ENCODE measurements at regions of chr1 and their contacts with region 1.

Region 1: DNA sequence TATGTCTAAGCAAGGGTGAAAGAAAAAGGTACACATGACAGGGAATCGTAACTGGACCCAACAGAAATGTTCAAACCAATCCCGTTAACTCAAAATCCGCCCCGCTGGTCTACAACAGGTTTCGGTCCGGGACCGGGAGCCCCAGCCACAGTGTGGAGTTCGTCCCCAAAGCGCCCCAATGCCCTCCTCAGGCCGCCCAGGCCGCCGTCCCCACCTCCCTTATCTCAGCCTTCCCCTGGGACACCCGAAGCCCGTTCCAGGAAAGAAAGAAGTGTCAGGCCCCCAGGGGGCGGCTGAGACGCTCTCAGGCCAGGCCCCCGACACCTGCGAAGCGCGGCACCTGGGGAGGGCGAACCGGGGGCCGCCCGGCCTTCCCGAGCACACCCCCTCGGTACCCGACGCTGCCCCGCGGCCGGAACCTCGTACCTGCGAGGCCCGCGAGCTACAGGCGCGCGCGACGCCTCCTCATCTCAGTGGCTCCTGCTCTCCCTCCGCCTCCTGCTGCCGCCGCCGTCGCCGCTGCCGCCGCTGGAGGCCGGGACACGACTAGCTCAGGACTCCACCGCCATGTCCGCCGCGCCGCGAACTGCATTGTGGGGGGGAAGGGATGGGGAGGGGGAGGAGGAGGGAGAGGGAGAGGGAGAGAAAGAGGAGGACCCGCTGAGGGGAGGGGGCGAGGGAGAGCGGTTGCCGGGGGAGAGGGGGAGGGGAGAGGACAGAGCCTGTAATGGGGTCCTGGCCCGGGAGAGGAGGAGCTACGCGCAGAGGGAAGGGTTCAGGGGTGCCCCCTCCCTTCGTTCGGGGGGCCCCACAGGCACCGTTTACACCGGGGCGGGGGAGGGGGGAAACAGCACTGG is at the start of gene TUT4:
- DNase-seq: peak; percentile 74
- ATAC-seq: peak; percentile 53
- H3K4me3 Mint-ChIP-seq: no peak within 1 kb of the TSS
- H3K27ac Mint-ChIP-seq: peak within 1 kb of the TSS; percentile 83
- H3K4me1 Mint-ChIP-seq: peaks cover 39% of the 10 kb centered on the region
- H3K27me3 Mint-ChIP-seq: no peaks in the 10 kb centered on the region
- CTCF ChIP-seq: no peak
- total RNA-seq, gene TUT4: 143 and 158 TPM in 2 replicates

Region 2: GRCh38 chr1:52365746-52366516 is 186.8 kb before region 1 on chr1 and contains the start of gene CC2D1B:
- CTCF ChIA-PET with region 1: no interaction called
- POLR2A ChIA-PET with region 1: interaction called, 3 read pairs
- intact Hi-C with region 1: loop called (anchors 10 kb)
- DNase-seq: peak; percentile 100
- ATAC-seq: peak; percentile 95
- H3K4me3 Mint-ChIP-seq: peak within 1 kb of the TSS; percentile 94
- H3K27ac Mint-ChIP-seq: peak within 1 kb of the TSS; percentile 88
- H3K4me1 Mint-ChIP-seq: peaks cover 30% of the 10 kb centered on the region
- H3K27me3 Mint-ChIP-seq: peaks cover 2% of the 10 kb centered on the region
- CTCF ChIP-seq: no peak
- total RNA-seq, gene CC2D1B: 51.3 and 66.4 TPM in 2 replicates

Region 3: DNA sequence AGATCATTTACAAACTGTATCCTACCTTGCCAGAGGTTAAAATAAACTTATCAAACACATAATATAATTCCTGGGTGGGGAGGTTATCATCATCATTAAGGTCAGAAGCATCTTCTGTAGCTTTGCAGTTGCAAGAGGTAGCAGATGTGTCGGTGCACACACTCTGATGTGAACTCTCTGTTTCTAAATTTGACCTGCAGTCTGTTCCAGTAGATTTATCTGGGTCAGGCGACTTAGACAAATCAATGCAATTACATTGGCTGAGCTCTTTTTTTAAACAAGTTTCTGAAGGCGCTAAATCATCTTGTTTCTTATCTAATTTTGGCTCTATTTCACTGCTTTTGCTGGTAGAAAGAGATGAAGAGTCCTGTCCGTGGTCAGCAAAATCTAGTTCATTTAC is 77.9 kb before region 1 on chr1:
- CTCF ChIA-PET with region 1: no interaction called
- POLR2A ChIA-PET with region 1: no interaction called
- intact Hi-C with region 1: no loop called
- DNase-seq: no peak
- ATAC-seq: no peak
- H3K4me3 Mint-ChIP-seq: no peak overlapping the region
- H3K27ac Mint-ChIP-seq: no peak overlapping the region
- H3K4me1 Mint-ChIP-seq: peaks cover 2% of the 10 kb centered on the region
- H3K27me3 Mint-ChIP-seq: no peaks in the 10 kb centered on the region
- CTCF ChIP-seq: no peak

Region 4: GRCh38 chr1:52534928-52535764 is 17.6 kb before region 1 on chr1:
- CTCF ChIA-PET with region 1: no interaction called
- POLR2A ChIA-PET with region 1: interaction called, 71 read pairs
- intact Hi-C with region 1: loop called (anchors 1 kb)
- DNase-seq: no peak
- ATAC-seq: no peak
- H3K4me3 Mint-ChIP-seq: no peak overlapping the region
- H3K27ac Mint-ChIP-seq: no peak overlapping the region
- H3K4me1 Mint-ChIP-seq: peaks cover 74% of the 10 kb centered on the region
- H3K27me3 Mint-ChIP-seq: no peaks in the 10 kb centered on the region
- CTCF ChIP-seq: no peak

Region 5: DNA sequence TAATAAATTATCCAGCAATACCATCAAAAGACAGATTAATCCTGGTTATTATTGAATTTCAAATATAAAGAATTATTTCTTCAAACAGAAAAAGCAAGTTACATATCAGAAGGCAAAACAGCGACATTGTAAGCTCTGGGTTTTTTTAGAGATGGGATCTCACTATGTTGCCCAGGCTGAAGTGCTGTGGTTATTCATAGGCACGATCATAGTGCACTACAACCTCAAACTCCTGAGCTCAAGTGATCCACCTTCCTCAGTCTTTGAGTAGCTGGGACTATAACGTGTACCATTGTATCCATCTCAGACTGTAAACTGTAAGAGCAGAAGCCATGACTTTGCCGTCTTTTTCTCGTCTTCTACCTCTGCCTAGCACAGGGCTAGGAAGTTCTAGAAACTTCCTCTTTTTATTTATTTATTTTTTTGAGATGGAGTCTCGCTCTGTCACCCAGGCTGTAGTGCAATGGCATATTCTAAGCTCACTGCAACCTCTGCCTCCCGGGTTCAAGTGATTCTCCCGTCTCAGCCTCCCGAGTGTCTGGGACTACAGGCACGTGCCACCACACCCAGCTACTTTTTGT is 29.5 kb after region 1 on chr1:
- CTCF ChIA-PET with region 1: no interaction called
- POLR2A ChIA-PET with region 1: no interaction called
- intact Hi-C with region 1: no loop called
- DNase-seq: no peak
- ATAC-seq: no peak
- H3K4me3 Mint-ChIP-seq: no peak overlapping the region
- H3K27ac Mint-ChIP-seq: no peak overlapping the region
- H3K4me1 Mint-ChIP-seq: peaks cover 7% of the 10 kb centered on the region
- H3K27me3 Mint-ChIP-seq: no peaks in the 10 kb centered on the region
- CTCF ChIP-seq: no peak

Region 6: DNA sequence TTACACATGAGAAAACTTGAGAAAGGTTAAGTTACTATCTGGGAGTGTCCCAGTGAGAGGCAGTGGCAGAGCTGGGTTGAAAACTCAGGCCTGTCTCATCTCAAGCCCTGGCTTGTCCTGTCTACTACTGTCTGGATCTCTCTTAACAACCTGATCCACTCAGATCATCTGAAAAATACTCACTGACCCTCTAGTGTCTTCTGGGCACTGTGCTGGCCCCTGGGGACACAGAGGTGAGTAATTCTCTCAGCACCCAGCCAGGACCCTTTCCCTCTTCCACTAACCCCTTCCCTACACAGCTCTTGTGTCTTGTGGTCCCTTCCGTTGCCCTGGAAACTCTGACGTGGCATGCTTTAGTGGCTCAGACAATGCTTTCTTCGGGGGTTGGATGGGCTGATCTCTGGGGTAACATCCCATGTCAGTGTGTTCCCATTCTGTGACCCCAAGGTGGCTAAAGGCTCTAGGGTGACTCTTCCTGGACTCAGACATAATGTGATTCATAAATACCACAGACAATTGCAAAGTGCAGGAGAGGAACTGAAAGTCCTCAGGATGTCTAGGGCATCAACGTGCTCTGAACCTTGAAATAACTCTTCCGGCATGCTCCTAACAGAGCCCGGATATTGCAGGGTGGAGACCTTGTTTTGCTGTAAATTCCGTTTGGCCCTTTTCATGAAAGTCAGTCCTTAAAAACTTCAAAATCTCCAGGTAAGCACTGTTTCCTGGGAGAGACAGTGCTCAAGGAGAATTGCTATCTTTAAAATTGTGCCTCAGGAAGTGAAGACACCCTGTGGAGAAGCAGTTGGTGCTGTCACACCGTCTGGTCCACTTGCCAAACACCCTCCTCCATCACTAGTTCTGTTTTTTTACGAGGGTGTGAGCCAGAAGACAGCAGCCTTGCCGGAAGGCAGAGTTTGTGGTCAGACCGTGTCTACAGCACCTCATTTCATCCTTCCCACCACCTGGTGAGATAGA is 84.3 kb after region 1 on chr1:
- CTCF ChIA-PET with region 1: interaction called, 6 read pairs
- POLR2A ChIA-PET with region 1: interaction called, 163 read pairs
- intact Hi-C with region 1: loop called (anchors 1 kb)
- DNase-seq: peak; percentile 67
- ATAC-seq: peak; percentile 69
- H3K4me3 Mint-ChIP-seq: peak overlapping the region; percentile 81
- H3K27ac Mint-ChIP-seq: peak overlapping the region; percentile 99
- H3K4me1 Mint-ChIP-seq: peaks cover 90% of the 10 kb centered on the region
- H3K27me3 Mint-ChIP-seq: no peaks in the 10 kb centered on the region
- CTCF ChIP-seq: no peak

Region 7: DNA sequence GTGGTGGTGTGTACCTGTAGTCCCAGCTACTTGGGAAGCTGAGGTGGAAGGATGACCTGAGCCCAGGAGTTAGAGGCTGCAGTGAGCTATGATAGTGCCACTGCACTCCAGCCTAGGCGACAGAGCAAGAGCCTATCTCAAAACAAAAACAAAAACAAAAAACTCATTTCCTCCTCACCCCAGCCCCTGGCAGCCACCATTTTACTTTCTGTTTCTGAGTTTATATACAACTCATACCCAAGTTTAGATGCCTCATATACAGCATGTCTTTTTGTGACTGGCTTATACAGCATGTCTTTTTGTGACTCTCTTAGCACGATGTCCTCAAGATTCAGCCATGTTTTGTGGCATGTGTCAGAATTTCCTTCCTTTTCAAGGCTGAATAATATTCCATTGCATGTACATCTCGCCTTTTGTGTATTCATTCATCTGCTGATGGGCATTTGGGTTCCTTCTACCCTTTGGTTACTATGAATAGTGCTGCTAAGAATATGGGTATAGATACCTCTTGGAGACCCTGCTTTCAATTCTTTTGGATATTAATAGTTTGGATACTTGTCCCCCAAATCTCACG is 130.7 kb after region 1 on chr1:
- CTCF ChIA-PET with region 1: no interaction called
- POLR2A ChIA-PET with region 1: interaction called, 21 read pairs
- intact Hi-C with region 1: loop called (anchors 1 kb)
- DNase-seq: no peak
- ATAC-seq: no peak
- H3K4me3 Mint-ChIP-seq: no peak overlapping the region
- H3K27ac Mint-ChIP-seq: no peak overlapping the region
- H3K4me1 Mint-ChIP-seq: peaks cover 44% of the 10 kb centered on the region
- H3K27me3 Mint-ChIP-seq: no peaks in the 10 kb centered on the region
- CTCF ChIP-seq: no peak

Measured in activated B cell treated with CpG ODN at 0.5 μM for 24 hours (primary cell).